ENCODE measurements at regions of chr1 and their contacts with region 1.

Region 1: DNA sequence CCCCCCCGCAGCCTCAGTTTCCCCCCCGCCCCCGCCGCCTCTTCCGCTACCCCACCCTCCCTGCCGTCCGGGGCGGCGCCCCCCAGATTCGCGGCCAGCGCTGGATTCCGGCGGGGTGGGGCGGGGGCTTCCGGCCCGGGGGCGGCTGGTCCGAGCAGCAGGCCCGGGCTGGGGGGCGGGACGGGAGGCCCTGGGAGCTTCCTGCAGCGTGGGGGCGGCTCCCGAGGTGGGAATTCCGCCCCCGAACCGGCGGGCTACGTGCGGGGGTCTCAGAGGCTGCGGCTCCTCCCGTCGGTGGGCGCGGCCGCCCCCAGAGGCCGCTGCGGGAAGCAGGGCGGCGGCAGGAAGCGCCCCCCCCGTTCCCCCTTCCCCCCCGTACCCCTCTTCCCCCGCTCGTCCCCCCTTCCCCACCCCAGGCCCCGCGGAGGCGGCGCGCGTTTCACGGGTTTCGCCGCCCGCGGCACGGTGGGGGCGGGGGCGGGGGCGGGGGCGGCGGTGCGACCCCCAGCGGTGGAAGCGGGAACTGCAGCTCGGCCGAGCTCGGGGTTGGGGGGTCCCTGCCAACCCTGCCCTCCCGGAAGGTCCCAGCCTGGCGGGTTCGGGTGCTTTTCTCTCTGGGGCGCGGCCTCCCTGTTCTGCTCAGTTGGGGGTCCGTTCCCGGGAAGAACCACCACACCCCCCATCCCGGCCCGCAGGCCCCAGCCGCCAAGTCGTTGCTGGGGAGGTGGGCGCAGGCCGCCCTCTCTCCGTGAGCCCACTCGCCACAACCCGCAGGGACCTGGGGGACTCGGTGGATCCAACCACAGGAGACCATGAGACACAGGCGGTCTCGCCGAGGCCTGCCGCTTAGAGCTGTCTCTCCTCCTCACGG is 76.3 kb downstream of the MORN1 start:
- DNase-seq: peak; percentile 71
- ATAC-seq: peak; percentile 20
- H3K4me3 Mint-ChIP-seq: peak overlapping the region; percentile 21
- H3K27ac Mint-ChIP-seq: peak overlapping the region; percentile 58
- H3K4me1 Mint-ChIP-seq: peaks cover 9% of the 10 kb centered on the region
- H3K27me3 Mint-ChIP-seq: no peaks in the 10 kb centered on the region

Region 2: DNA sequence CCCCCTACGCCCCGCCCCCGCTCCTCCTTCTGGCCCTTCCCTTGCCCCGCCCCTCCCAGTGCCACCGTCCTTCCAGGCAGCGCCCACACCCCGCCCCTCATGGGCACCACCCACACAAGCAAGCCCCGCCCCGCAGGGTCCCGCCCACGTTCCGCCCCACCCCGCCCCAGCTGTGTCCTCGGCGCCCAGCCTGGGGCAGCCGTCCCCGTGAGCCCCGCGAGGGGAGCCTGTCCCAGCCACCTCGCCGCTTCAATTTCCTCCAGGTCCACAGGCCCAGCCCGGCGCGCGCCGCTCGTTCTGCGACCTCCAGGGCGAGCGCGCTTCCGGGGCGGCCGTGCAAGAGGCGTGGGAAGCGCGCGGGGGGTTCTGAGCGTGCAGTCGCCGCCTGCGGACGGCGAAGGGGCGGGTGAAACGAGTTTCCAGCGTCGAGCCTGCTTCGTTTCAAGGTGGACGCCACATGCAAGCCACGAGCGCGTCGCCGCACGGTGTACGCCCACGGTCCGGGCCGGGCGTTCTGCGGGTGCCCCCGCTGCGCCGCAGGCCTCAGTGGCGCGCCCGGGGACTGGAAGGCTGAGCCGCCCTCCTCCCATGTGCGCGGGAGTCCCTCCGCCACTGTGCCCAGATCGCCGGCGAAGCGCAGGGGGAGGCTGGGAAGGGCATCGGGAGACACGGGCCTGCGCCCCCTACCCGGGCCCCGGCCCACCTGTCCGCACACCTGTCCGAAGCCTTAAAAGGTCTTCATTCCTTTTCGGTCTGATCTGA is 109.7 kb before region 1 on chr1:
- CTCF ChIA-PET with region 1: no interaction called
- POLR2A ChIA-PET with region 1: no interaction called
- intact Hi-C with region 1: loop called in 1 of 2 experiments (anchors 2 kb)
- DNase-seq: peak; percentile 98
- ATAC-seq: peak; percentile 88
- H3K4me3 Mint-ChIP-seq: peak overlapping the region; percentile 51
- H3K27ac Mint-ChIP-seq: no peak overlapping the region
- H3K4me1 Mint-ChIP-seq: peaks cover 3% of the 10 kb centered on the region
- H3K27me3 Mint-ChIP-seq: no peaks in the 10 kb centered on the region